Activated T-helper 1 cell treated with anti-CD3 and anti-CD28 coated beads, Interleukin-12 subunit alpha, Interleukin-12 subunit beta, Interleukin-2, Interleukin-4 antibody, amounts not matched to agents 30 ng/mL and 10 ng/mL and 1 ng/mL, durations not matched to agents 14 hours and 24 hours and 36 hours (primary cell): ENCODE measurements at regions of chr9 and their contacts with region 1.

Region 1: DNA sequence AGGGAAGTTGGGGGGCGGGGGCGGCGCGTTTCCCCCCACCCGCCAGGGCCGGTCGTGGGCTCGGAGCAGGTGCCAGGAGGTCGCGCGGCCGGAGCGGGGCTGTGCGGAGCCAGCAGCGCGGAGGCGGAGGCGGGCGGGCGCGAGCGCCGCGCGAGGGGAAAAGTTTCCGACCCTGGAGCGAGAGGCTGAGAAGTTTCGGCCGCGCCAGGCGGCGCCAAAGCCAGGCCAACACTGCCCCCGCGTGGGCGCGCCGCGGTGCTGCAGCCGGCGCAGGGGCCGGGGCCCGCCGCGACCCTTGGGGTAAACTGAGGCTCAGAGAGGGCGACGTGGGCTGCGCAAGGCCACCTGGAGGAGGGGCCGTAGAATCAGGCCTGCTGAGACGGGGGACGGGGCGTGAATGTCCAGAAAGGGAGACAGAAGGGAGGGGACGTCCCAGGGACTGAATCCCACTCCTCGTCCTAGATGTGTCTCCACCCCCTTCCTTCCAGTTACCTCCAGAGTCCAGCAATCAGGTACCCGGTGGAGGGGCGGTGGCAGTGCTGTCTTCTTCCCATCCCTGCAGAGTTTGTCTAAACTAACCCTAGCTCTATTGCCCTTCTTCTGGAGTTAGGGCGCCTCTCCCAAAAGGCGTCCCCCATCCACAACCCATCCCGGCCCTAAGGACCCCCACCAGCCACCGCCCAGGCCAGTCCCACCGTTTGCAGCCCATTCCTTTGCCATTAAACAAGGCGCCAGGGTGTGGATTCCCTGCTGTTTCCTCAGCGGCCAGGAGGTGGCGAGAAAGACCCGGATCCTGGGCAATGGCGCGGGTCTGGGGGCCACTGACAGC is 10.2 kb downstream of the C9orf50 start:
- DNase-seq: peak; percentile 62
- H3K4me3 Mint-ChIP-seq: peak overlapping the region; percentile 82
- H3K27ac Mint-ChIP-seq: peak overlapping the region; percentile 83
- H3K4me1 Mint-ChIP-seq: peaks cover 38% of the 10 kb centered on the region
- H3K27me3 Mint-ChIP-seq: peaks cover 5% of the 10 kb centered on the region

Region 2: GRCh38 chr9:129258124-129258822 is 352.4 kb before region 1 on chr9:
- intact Hi-C with region 1: loop called (anchors 5 kb)
- DNase-seq: peak; percentile 85
- H3K4me3 Mint-ChIP-seq: peak overlapping the region; percentile 60
- H3K27ac Mint-ChIP-seq: no peak overlapping the region
- H3K4me1 Mint-ChIP-seq: peaks cover 33% of the 10 kb centered on the region
- H3K27me3 Mint-ChIP-seq: peaks cover 23% of the 10 kb centered on the region

Region 3: GRCh38 chr9:129460323-129461261 is 150.1 kb before region 1 on chr9:
- intact Hi-C with region 1: loop called (anchors 2 kb)
- DNase-seq: peak; percentile 83
- H3K4me3 Mint-ChIP-seq: peak overlapping the region; percentile 74
- H3K27ac Mint-ChIP-seq: peak overlapping the region; percentile 91
- H3K4me1 Mint-ChIP-seq: peaks cover 39% of the 10 kb centered on the region
- H3K27me3 Mint-ChIP-seq: peaks cover 1% of the 10 kb centered on the region

Region 4: DNA sequence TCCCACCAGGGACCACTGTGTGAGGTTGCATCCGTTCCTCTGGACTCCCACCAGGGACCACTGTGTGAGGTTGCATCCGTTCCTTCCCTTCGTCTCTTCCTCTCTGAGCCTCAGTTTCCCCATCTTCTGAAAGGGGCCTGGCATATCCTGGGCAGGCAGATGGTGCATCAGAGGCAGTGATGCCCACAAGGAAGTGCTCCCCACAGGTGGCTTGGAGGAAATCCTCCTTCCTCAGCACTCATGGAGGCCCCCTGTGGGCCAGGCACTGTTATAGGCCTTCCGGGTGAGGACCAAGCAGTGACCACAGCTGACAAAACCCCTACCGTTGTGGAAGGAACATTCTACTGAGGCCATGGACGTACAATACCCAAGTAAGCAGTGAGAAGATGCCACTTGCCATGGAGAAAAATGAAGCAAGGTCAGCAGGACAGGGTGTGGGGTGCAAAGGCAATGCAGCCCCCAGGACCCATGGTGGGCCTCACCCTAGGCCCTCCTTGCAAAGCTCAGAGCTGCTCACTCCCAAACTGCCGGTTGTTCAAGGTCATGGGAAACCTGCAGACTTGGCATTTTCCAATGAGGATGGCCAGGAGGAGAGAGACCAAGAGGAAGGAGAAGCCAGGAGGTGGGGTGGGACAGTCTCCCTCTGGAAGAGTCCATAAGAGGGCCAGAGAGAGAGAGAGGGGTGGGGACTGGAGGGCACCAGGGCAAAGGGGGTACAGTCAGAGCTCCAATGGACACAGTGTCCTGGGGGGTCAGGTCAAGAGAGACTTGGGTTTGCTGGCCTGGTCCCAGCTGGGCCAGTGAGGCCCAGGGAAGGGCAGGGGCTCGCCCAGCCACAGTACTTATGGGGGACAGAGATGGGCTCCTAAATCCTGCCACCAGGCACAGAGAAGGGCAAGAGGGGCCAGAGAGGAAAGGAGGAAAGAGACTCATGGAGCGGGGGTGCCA is 40.9 kb before region 1 on chr9:
- intact Hi-C with region 1: loop called (anchors 5 kb)
- DNase-seq: no peak
- H3K4me3 Mint-ChIP-seq: peak overlapping the region; percentile 81
- H3K27ac Mint-ChIP-seq: peak overlapping the region; percentile 79
- H3K4me1 Mint-ChIP-seq: peaks cover 31% of the 10 kb centered on the region
- H3K27me3 Mint-ChIP-seq: peaks cover 23% of the 10 kb centered on the region

Region 5: GRCh38 chr9:129597355-129598088 is 13.2 kb before region 1 on chr9:
- intact Hi-C with region 1: loop called (anchors 1 kb)
- DNase-seq: peak; percentile 46
- H3K4me3 Mint-ChIP-seq: peak overlapping the region; percentile 55
- H3K27ac Mint-ChIP-seq: peak overlapping the region; percentile 75
- H3K4me1 Mint-ChIP-seq: peaks cover 34% of the 10 kb centered on the region
- H3K27me3 Mint-ChIP-seq: no peaks in the 10 kb centered on the region